ENCODE measurements at regions of chr4 and their contacts with region 1.

Region 1: DNA sequence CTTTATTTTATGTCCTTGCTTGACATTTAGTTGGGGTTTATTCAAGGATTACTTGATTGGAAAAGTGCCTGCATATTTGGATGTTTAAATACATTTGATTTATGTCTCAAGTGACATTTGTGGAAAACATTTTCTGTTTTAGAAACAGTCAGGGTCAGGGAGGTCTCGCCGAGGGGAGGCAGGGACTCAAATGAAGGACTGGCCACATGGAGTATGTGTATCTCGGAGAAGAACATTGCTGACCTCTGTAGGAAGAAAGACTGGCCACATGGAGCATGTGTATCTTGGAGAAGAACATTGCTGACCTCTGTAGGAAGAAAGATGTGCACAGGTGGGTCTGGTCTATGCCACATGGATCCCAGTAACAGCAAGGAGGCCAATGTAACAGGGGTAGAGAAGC is 233.6 kb downstream of the TRIML1 start:
- DNase-seq: peak; percentile 88 to 90
- H3K4me3 ChIP-seq: no peak overlapping the region
- H3K4me3 Mint-ChIP-seq: no peak overlapping the region
- H3K27ac Mint-ChIP-seq: no peak overlapping the region
- H3K4me1 ChIP-seq: peaks cover 14% of the 10 kb centered on the region
- H3K4me1 Mint-ChIP-seq: peaks cover 3% of the 10 kb centered on the region
- H3K27me3 ChIP-seq: no peaks in the 10 kb centered on the region
- H3K27me3 Mint-ChIP-seq: no peaks in the 10 kb centered on the region
- CTCF ChIP-seq: peak; percentile 69 to 83

Region 2: DNA sequence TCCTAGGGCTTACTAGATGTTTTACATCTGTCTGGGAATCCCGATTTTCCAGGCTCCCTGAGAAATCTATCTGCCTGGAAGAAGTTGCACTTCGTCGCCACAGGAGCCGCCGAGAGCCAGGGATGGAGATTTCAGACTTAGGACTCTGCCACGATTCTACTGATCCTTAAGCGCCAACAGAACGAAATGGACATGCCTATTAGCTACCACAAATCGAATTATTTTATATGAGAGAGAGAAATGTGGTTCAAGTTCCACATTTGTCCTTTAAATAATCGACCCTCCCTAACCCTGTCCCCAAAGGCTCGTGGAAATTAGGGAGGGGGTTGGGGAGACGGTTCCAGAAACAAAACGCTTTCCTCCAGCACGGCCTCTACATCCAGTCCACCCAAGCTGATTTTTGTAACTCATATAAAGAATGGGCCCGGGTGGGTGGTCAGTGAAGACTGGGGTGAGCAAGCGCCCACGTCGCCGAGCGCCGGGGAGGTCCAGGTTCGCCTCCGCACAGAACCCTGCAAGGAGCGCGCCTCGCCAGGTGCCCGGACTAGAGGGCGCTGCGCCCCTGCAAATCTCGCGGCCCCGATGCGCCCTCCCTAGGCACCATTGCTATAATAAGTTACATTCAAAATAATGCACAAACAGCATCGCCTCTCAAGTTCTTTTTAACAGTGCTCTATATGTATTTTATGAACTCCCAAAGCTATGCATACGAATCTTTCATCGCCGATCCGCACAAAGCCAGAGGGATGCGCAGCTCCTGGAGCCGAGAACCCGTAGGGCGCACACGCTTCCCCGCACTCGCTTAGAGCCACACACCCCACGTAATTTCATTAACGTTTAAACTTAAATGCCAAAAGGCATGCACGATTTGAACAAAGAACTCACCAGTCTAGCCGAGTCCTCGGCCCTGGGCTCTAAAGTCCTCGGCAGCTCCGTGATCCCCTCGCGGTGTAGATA is 1647.1 kb before region 1 on chr4:
- CTCF ChIA-PET with region 1: no interaction called
- POLR2A ChIA-PET with region 1: no interaction called
- intact Hi-C with region 1: loop called (anchors 1 kb)
- DNase-seq: peak; percentile 72 to 82
- H3K4me3 ChIP-seq: peak overlapping the region; percentile 83
- H3K4me3 Mint-ChIP-seq: peak overlapping the region; percentile 92
- H3K27ac Mint-ChIP-seq: peak overlapping the region; percentile 63
- H3K4me1 ChIP-seq: peaks cover 6% of the 10 kb centered on the region; the same call in 1 of the 2 replicates
- H3K4me1 Mint-ChIP-seq: peaks cover 9% of the 10 kb centered on the region
- H3K27me3 ChIP-seq: no peaks in the 10 kb centered on the region
- H3K27me3 Mint-ChIP-seq: no peaks in the 10 kb centered on the region
- CTCF ChIP-seq: peak; percentile 60 to 80

Region 3: DNA sequence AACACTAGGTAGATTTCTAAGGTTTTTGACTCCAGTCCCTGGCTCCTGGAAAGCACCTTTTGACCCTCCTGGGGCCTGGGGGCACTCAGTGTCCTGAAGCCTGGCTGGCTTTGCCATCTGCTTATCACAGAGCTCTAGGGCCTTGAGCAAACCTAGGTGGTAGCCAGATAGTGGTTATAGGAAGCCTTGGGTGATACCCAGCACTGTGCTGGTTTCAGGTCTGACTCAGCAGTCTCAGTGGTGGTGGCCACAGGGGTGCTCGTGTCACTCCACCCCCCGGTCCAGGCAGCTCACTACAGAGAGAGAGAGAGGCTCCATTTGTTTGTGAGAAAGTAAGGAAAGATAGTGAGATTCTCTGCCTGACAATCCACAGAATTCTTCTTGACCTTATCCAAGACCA is 573.1 kb before region 1 on chr4:
- CTCF ChIA-PET with region 1: no interaction called
- POLR2A ChIA-PET with region 1: no interaction called
- intact Hi-C with region 1: loop called (anchors 1 kb)
- DNase-seq: no peak
- H3K4me3 ChIP-seq: no peak overlapping the region
- H3K4me3 Mint-ChIP-seq: no peak overlapping the region
- H3K27ac Mint-ChIP-seq: no peak overlapping the region
- H3K4me1 ChIP-seq: no peaks in the 10 kb centered on the region
- H3K4me1 Mint-ChIP-seq: no peaks in the 10 kb centered on the region
- H3K27me3 ChIP-seq: no peaks in the 10 kb centered on the region
- H3K27me3 Mint-ChIP-seq: no peaks in the 10 kb centered on the region
- CTCF ChIP-seq: no peak

Region 4: GRCh38 chr4:187993827-187994226 is 379.0 kb before region 1 on chr4:
- CTCF ChIA-PET with region 1: no interaction called
- POLR2A ChIA-PET with region 1: no interaction called
- intact Hi-C with region 1: loop called (anchors 1 kb)
- DNase-seq: peak in 1 of 2 experiments; percentile 37
- H3K4me3 ChIP-seq: no peak overlapping the region
- H3K4me3 Mint-ChIP-seq: no peak overlapping the region
- H3K27ac Mint-ChIP-seq: no peak overlapping the region
- H3K4me1 ChIP-seq: no peaks in the 10 kb centered on the region
- H3K4me1 Mint-ChIP-seq: no peaks in the 10 kb centered on the region
- H3K27me3 ChIP-seq: no peaks in the 10 kb centered on the region
- H3K27me3 Mint-ChIP-seq: no peaks in the 10 kb centered on the region
- CTCF ChIP-seq: peak in 1 of 2 experiments; percentile 2

Region 5: GRCh38 chr4:188107931-188108843 is 264.6 kb before region 1 on chr4:
- CTCF ChIA-PET with region 1: no interaction called
- POLR2A ChIA-PET with region 1: no interaction called
- intact Hi-C with region 1: loop called (anchors 1 kb)
- DNase-seq: peak in 1 of 2 experiments; percentile 13
- H3K4me3 ChIP-seq: no peak overlapping the region
- H3K4me3 Mint-ChIP-seq: peak overlapping the region; percentile 36
- H3K27ac Mint-ChIP-seq: peak overlapping the region; percentile 29
- H3K4me1 ChIP-seq: peaks cover 32% of the 10 kb centered on the region
- H3K4me1 Mint-ChIP-seq: peaks cover 24% of the 10 kb centered on the region
- H3K27me3 ChIP-seq: no peaks in the 10 kb centered on the region
- H3K27me3 Mint-ChIP-seq: no peaks in the 10 kb centered on the region
- CTCF ChIP-seq: no peak

Region 6: GRCh38 chr4:188329521-188329920 is 43.3 kb before region 1 on chr4:
- CTCF ChIA-PET with region 1: no interaction called
- POLR2A ChIA-PET with region 1: no interaction called
- intact Hi-C with region 1: loop called (anchors 1 kb)
- DNase-seq: peak; percentile 75 to 78
- H3K4me3 ChIP-seq: no peak overlapping the region
- H3K4me3 Mint-ChIP-seq: peak overlapping the region; percentile 47
- H3K27ac Mint-ChIP-seq: peak overlapping the region; percentile 93
- H3K4me1 ChIP-seq: peaks cover 41% of the 10 kb centered on the region
- H3K4me1 Mint-ChIP-seq: peaks cover 27% of the 10 kb centered on the region
- H3K27me3 ChIP-seq: no peaks in the 10 kb centered on the region
- H3K27me3 Mint-ChIP-seq: no peaks in the 10 kb centered on the region
- CTCF ChIP-seq: no peak